A549 (cell line): ENCODE measurements at regions of chr2 and their contacts with region 1.

Region 1: GRCh38 chr2:174263989-174264388 is 15.7 kb upstream of the OLA1 start:
- DNase-seq: peak; percentile 56 to 81
- ATAC-seq: peak; percentile 98 to 100
- H3K4me3 ChIP-seq: no peak overlapping the region
- H3K27ac ChIP-seq: peak overlapping the region; percentile 71 to 87
- H3K4me1 ChIP-seq: peaks cover 18% of the 10 kb centered on the region
- CTCF ChIP-seq: no peak
- EP300 ChIP-seq: no peak
- POLR2A ChIP-seq: no peak
- RAD21 ChIP-seq: no peak

Region 2: DNA sequence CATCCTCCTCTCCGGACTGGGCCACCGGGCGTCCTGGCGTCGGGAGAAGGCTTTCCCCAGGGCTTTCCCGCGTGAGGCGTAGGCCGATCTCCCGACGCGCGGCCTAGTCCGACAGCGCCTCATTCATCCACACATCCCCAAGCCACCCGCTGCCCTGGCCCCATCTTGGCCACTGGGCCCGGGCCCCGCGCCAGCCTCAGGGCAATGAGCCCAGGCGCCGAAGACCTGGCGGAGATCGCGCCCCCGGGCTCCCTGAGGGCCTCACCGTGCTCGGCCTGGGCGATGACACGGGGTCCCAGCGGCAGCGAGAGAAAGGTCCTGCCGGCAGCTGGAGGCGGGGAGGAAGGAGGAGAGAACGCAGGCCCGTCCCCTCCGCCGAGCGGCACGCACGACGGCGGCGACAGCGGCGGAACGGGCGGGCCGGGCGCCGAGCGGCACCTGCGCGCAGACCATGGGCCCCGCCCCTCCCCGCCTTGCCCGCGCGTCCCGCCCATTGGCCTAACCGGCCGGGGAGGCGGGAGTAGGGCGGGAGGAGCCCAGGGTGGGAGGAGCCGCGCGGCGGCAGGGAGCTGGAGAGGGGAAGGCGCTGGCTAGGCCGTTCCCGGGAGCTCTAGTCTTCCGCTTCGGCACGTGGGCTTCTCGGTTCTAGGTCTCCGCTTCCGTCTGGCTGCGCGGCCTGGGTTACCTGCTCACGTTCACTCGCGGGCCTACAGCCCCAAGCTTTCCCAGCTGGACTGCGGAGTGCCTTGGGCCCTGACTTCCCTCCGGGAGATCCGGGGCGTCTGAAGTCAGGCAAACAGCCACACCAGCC is 15.6 kb before region 1 on chr2 and contains the start of gene OLA1:
- CTCF ChIA-PET with region 1: interaction called, 3 read pairs
- POLR2A ChIA-PET with region 1: interaction called, 12 read pairs
- DNase-seq: peak; percentile 88 to 95
- ATAC-seq: peak; percentile 97
- H3K4me3 ChIP-seq: peak within 1 kb of the TSS; percentile 88
- H3K27ac ChIP-seq: peak within 1 kb of the TSS; percentile 86 to 94
- H3K4me1 ChIP-seq: peaks cover 14% of the 10 kb centered on the region
- CTCF ChIP-seq: no peak
- EP300 ChIP-seq: no peak
- POLR2A ChIP-seq: peak; percentile 94
- RAD21 ChIP-seq: peak in 1 of 2 experiments; percentile 23; a peak in 1 of 5 replicates
- polyA plus RNA-seq, gene OLA1: 145 and 226 TPM in 2 replicates

Region 3: DNA sequence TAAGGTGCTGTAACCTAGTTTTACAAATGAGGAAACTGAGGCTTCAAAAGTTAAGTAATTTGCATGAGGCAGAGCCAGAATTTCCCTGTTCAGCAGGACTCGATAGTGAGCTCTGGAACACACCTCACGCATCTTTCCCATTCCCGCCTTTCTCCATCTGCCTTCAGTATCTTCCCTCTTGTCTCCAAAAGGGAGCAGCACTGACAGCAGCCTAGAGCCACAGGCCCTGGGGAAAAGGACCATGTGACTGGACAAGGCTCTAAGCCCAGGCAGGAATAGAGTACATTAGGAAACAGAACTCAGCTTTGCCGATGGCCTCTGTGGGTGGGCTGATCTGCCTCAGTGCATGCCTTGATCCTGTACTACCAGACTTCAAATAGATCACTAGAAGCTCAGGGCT is 201.3 kb after region 1 on chr2:
- CTCF ChIA-PET with region 1: no interaction called
- POLR2A ChIA-PET with region 1: no interaction called
- DNase-seq: peak in 1 of 2 experiments; percentile 33
- ATAC-seq: peak; percentile 56 to 67; a peak in 4 of 6 replicates
- H3K4me3 ChIP-seq: no peak overlapping the region
- H3K27ac ChIP-seq: no peak overlapping the region
- H3K4me1 ChIP-seq: no peaks in the 10 kb centered on the region
- CTCF ChIP-seq: no peak
- EP300 ChIP-seq: no peak
- POLR2A ChIP-seq: no peak
- RAD21 ChIP-seq: no peak